GM10248 (cell line): ENCODE measurements at regions of chr15 and their contacts with region 1.

Region 1: DNA sequence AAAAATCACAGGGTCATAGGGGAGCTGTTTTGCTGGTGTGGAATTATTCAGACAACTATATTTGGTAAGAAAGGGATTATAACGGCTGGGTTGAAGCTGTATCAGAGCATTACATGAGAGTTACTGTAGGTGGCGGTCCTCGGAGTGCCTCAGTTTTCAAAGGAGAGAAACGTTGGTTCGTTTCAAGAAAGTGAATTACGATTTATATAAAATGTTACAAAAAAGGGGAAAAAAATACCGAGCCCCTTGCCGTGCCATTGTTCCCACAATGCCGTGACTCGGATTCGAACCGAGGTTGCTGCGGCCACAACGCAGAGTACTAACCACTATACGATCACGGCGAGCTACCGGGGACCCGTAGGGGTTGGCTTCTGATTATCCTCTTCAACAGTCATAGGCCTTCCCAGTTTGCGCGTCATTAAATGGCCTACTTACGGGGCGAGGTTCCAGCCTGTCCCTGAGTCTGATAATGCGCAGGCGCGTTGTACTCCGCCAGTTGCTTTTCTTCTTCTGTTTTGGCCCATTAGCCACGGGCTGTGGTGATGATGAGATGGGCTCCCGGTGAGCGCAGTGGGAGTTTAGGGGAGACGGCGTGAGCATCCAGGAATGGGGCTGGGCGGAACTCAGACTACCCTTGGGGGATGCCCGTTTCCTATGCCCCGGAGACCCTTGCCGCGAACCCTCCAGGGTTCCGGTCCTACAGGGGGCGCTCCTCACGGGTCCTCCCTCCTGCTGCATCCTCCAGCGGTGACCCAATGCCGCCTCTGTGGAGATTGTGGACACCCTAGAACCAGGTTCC is 10.8 kb upstream of the SHF start:
- DNase-seq: peak; percentile 90
- CTCF ChIP-seq: peak; percentile 69

Region 2: DNA sequence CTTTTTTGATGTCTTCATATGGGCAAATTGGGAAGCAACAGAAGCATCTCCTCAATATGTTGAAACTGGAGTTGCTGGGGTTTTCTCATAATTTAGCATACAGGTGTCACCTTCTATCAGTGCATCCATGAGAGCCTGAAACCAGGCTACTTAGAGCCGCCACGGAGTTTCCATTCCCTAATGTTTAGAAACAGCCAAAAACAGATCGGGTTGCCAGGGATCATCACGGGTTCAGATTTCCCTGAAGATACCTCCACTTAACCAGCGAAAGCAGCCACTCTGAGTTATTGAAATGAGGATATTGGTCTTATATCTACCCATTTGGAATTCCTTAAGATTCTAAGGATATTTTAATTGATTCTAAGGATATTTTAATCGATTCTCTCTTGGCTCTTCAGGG is 227.5 kb before region 1 on chr15:
- CTCF ChIA-PET with region 1: no interaction called
- POLR2A ChIA-PET with region 1: no interaction called
- DNase-seq: no peak
- CTCF ChIP-seq: no peak

Region 3: DNA sequence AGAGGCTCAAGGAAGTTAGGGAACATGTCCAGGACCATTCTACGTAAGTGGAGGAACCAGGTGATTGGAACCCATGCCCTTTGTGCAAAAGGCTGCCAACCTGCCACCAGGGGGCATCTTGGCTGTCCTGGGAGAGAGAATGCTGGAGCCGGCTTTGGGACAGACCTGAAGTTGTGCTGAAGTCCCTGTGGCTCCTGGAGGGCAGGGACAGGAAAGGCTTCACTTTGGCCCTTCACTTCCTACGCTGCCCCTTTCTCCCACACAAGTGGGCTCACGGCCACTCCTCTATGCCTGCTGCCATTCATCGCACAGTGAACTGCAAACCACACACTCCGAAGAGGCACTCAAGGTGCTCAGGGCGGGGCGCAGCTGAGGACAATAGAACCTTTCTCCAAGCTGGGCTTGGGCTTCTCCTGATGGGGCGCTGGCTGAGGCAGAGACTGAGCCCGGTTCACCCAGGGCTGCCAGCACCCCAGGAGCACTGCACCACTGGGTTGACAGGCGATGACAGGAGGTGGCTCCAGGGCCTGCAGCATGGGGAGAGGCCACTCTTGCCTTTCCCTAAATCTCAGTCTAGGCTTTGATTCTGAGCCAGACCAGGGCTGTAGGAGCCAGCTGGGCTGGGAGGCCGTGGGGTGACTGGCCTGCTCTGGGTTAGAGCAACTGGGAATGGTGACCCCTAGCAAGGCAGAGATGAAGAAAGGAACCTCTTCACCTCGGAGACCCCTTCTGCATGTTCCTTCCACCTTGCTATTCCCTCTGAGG is 19.1 kb before region 1 on chr15:
- CTCF ChIA-PET with region 1: interaction called, 40 read pairs
- POLR2A ChIA-PET with region 1: interaction called, 4 read pairs
- DNase-seq: peak; percentile 60
- CTCF ChIP-seq: peak; percentile 48

Region 4: GRCh38 chr15:45187894-45188830 is 10.4 kb before region 1 on chr15 and contains the start of gene SHF:
- CTCF ChIA-PET with region 1: interaction called, 21 read pairs
- POLR2A ChIA-PET with region 1: interaction called, 7 read pairs
- DNase-seq: peak; percentile 84
- CTCF ChIP-seq: no peak